Activated CD4-positive, alpha-beta T cell treated with anti-CD3 and anti-CD28 coated beads for 36 hours (primary cell): ENCODE measurements at regions of chr3 and their contacts with region 1.

Region 1: GRCh38 chr3:187714404-187714979 is 12.1 kb upstream of the RTP2 start:
- DNase-seq: peak; percentile 82
- ATAC-seq: peak; percentile 80
- H3K4me3 Mint-ChIP-seq: no peak overlapping the region
- H3K27ac Mint-ChIP-seq: no peak overlapping the region
- H3K4me1 Mint-ChIP-seq: peaks cover 12% of the 10 kb centered on the region
- H3K27me3 Mint-ChIP-seq: no peaks in the 10 kb centered on the region

Region 2: GRCh38 chr3:187223799-187224198 is 490.7 kb before region 1 on chr3:
- CTCF ChIA-PET with region 1: interaction called, 3 read pairs
- POLR2A ChIA-PET with region 1: no interaction called
- intact Hi-C with region 1: loop called (anchors 1 kb)
- DNase-seq: no peak
- ATAC-seq: no peak
- H3K4me3 Mint-ChIP-seq: no peak overlapping the region
- H3K27ac Mint-ChIP-seq: no peak overlapping the region
- H3K4me1 Mint-ChIP-seq: no peaks in the 10 kb centered on the region
- H3K27me3 Mint-ChIP-seq: peaks cover 3% of the 10 kb centered on the region

Region 3: GRCh38 chr3:187616307-187616972 is 98.1 kb before region 1 on chr3:
- CTCF ChIA-PET with region 1: interaction called, 28 read pairs
- POLR2A ChIA-PET with region 1: no interaction called
- intact Hi-C with region 1: loop called (anchors 1 kb)
- DNase-seq: peak; percentile 80
- ATAC-seq: peak; percentile 71
- H3K4me3 Mint-ChIP-seq: no peak overlapping the region
- H3K27ac Mint-ChIP-seq: no peak overlapping the region
- H3K4me1 Mint-ChIP-seq: no peaks in the 10 kb centered on the region
- H3K27me3 Mint-ChIP-seq: peaks cover 8% of the 10 kb centered on the region

Region 4: GRCh38 chr3:187702507-187703033 is 11.9 kb before region 1 on chr3 and contains the start of gene RTP2:
- CTCF ChIA-PET with region 1: interaction called, 30 read pairs
- POLR2A ChIA-PET with region 1: no interaction called
- intact Hi-C with region 1: no loop called
- DNase-seq: no peak
- ATAC-seq: no peak
- H3K4me3 Mint-ChIP-seq: no peak within 1 kb of the TSS
- H3K27ac Mint-ChIP-seq: no peak within 1 kb of the TSS
- H3K4me1 Mint-ChIP-seq: no peaks in the 10 kb centered on the region
- H3K27me3 Mint-ChIP-seq: no peaks in the 10 kb centered on the region
- total RNA-seq, gene RTP2: not detected

Region 5: DNA sequence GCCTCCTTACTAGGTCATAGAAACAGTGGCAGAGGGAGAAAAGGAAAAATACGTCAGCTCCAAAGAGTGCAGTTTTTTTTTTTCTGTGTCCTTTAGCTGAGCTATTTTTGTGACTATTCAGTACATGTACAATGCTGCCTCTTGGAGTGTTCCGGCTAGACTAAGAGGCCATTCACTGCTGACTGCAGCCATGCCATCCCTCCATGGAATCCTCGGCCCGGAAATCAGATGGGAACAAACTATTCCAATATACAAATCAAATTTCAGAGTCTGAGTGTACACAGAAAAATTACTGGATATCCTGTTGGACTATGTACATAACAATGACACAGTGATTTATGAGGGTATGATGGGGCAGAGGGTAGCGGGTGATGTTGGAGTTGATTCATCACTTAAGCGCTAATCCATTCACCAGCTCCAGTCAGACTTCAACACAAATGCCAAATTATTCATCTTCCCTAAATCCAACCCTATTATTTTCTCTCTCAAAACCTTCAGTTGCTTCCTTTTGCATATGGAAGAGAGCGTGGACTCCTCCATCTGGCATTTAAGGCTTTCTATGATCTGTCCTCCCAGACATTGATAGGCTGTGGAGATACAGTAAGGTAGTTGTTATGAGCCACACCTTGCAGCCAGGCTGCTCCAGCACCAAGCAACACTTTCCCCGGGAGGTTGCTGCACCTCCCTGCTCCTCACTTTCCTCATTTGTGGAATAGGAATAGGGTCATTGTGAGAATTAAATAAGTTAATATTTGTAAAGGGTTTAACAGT is 548.6 kb after region 1 on chr3:
- CTCF ChIA-PET with region 1: no interaction called
- POLR2A ChIA-PET with region 1: no interaction called
- intact Hi-C with region 1: no loop called
- DNase-seq: no peak
- ATAC-seq: no peak
- H3K4me3 Mint-ChIP-seq: no peak overlapping the region
- H3K27ac Mint-ChIP-seq: no peak overlapping the region
- H3K4me1 Mint-ChIP-seq: peaks cover 3% of the 10 kb centered on the region
- H3K27me3 Mint-ChIP-seq: no peaks in the 10 kb centered on the region